ENCODE measurements at regions of chr3 and their contacts with region 1.

Region 1: GRCh38 chr3:195106418-195106906 is 164.5 kb downstream of the XXYLT1 start:
- DNase-seq: peak; percentile 42 to 85 (median 66)
- ATAC-seq: peak; percentile 100
- H3K4me3 ChIP-seq: peak overlapping the region in 1 of 2 experiments; percentile 44
- H3K4me3 Mint-ChIP-seq: peak overlapping the region; percentile 51
- H3K27ac ChIP-seq: no peak overlapping the region
- H3K27ac Mint-ChIP-seq: no peak overlapping the region
- H3K4me1 ChIP-seq: no peaks in the 10 kb centered on the region
- H3K4me1 Mint-ChIP-seq: peaks cover 4% of the 10 kb centered on the region
- H3K27me3 ChIP-seq: no peaks in the 10 kb centered on the region
- H3K27me3 Mint-ChIP-seq: no peaks in the 10 kb centered on the region
- CTCF ChIP-seq: peak; percentile 99

Region 2: GRCh38 chr3:195001961-195002861 is 104.3 kb before region 1 on chr3:
- CTCF ChIA-PET with region 1: interaction called, 28 read pairs
- POLR2A ChIA-PET with region 1: no interaction called
- intact Hi-C with region 1: loop called (anchors 1 to 2 kb)
- DNase-seq: peak in 4 of 9 experiments; percentile 21 to 51 (median 42)
- ATAC-seq: peak; percentile 46
- H3K4me3 ChIP-seq: no peak overlapping the region
- H3K4me3 Mint-ChIP-seq: no peak overlapping the region
- H3K27ac ChIP-seq: no peak overlapping the region
- H3K27ac Mint-ChIP-seq: no peak overlapping the region
- H3K4me1 ChIP-seq: peaks cover 4% of the 10 kb centered on the region
- H3K4me1 Mint-ChIP-seq: no peaks in the 10 kb centered on the region
- H3K27me3 ChIP-seq: no peaks in the 10 kb centered on the region
- H3K27me3 Mint-ChIP-seq: peaks cover 8% of the 10 kb centered on the region
- CTCF ChIP-seq: no peak

Region 3: DNA sequence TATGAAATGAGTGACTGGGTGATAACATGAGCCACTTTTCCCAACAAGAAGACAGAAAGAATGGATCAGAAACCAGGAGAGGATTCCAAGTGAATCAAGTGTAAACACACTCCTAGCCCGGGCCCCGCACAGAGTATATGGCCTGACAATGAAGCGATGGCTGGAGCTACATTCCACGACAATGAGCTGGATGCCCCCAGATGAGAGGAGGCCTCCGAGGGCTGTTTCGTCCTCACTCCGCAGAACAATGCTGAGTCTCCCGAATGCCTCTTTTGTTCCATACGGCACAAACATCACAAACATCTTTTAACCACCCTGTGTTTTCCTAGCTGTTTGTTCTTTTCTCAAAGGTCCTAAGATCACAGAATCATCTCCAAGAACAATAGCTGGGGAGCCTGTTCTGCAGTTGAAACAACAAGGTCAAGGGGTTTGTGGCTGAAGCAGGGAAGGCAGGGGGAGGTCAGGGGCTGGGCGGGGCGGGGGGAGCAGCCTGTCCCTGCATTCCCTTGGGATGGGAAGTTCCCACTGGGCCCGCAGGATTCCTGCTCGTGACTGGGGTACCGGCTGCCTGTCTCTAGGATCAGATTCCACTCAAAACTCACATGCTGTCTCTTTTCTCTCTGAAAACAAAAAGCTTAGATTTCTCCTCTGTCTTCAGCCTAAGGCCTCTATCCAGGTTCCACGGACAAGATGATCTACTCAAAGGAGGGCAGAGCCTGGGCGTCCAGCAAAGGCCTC is 13.2 kb after region 1 on chr3:
- CTCF ChIA-PET with region 1: interaction called, 23 read pairs
- POLR2A ChIA-PET with region 1: no interaction called
- intact Hi-C with region 1: no loop called
- DNase-seq: no peak
- ATAC-seq: no peak
- H3K4me3 ChIP-seq: no peak overlapping the region
- H3K4me3 Mint-ChIP-seq: no peak overlapping the region
- H3K27ac ChIP-seq: no peak overlapping the region
- H3K27ac Mint-ChIP-seq: no peak overlapping the region
- H3K4me1 ChIP-seq: no peaks in the 10 kb centered on the region
- H3K4me1 Mint-ChIP-seq: peaks cover 7% of the 10 kb centered on the region
- H3K27me3 ChIP-seq: no peaks in the 10 kb centered on the region
- H3K27me3 Mint-ChIP-seq: no peaks in the 10 kb centered on the region
- CTCF ChIP-seq: no peak